ENCODE measurements at regions of chr9 and their contacts with region 1.

Region 1: GRCh38 chr9:113095561-113095960 is 39.0 kb upstream of the ZFP37 start:
- DNase-seq: no peak
- ATAC-seq: no peak
- H3K4me3 ChIP-seq: no peak overlapping the region
- H3K27ac ChIP-seq: no peak overlapping the region
- H3K4me1 ChIP-seq: no peaks in the 10 kb centered on the region
- H3K27me3 ChIP-seq: peaks cover 6% of the 10 kb centered on the region

Region 2: DNA sequence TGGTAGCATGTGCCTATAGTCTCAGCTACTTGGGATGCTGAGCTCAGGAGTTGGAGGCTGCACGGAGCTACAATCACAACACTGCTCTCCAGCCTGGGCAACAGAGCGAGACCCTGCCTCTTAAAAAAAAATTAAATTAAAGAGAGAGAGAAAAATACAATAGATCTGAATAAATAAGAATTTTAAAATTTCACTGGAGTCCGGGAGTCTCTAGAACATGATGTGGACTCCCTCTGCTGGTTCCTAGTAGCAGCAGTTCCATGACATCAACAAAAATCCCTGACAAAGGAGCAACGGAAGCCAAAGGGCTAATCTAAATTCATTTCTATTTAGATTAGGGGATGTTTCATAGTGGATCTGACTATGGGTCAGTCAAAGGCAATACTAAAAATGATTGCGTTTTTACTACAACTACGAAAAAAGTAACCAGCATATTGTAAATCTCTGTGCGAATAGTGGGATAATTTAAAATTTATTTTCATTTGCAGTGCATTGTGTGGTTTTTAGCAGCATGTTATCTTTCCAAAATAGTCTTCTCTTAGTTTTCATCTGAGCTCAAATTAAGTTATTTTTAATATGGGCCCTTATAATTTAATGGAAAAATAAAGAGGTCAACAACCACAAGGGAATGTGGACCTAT is 384.4 kb before region 1 on chr9:
- intact Hi-C with region 1: no loop called
- DNase-seq: no peak
- ATAC-seq: peak in 1 of 2 donors; percentile 43
- H3K4me3 ChIP-seq: no peak overlapping the region
- H3K27ac ChIP-seq: no peak overlapping the region
- H3K4me1 ChIP-seq: no peaks in the 10 kb centered on the region
- H3K27me3 ChIP-seq: no peaks in the 10 kb centered on the region

Region 3: DNA sequence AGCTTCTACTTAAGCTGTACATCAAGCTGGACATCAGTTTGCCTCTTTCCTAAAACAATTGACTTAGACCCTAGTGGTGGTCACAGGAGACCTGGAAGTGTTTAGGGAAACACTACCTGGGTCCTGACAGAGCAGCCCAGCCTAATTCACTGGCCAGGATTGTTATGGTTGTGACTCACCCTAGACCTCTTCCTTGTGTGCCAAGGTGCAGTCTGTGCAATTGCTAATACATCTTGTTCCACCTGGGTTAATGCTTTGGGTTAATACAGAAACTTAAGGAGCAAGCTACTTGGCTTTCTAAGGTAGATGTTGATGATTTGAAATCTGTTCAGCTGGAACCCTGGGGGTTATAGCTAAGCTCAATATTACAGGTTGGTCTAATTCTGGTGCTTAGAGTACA is 156.1 kb before region 1 on chr9:
- intact Hi-C with region 1: loop called in 1 of 4 experiments (anchors 10 kb)
- DNase-seq: no peak
- ATAC-seq: no peak
- H3K4me3 ChIP-seq: no peak overlapping the region
- H3K27ac ChIP-seq: no peak overlapping the region
- H3K4me1 ChIP-seq: no peaks in the 10 kb centered on the region
- H3K27me3 ChIP-seq: peaks cover 3% of the 10 kb centered on the region

Region 4: GRCh38 chr9:113164536-113165300 is 69.2 kb after region 1 on chr9:
- intact Hi-C with region 1: no loop called
- DNase-seq: peak; percentile 59 to 86 (median 78)
- ATAC-seq: peak; percentile 56 to 68
- H3K4me3 ChIP-seq: no peak overlapping the region
- H3K27ac ChIP-seq: peak overlapping the region; percentile 2
- H3K4me1 ChIP-seq: peaks cover 8% of the 10 kb centered on the region
- H3K27me3 ChIP-seq: no peaks in the 10 kb centered on the region

Measured in right cardiac atrium (tissue), 5 donors.